IMR-90 (cell line): ENCODE measurements at regions of chr2 and their contacts with region 1.

Region 1: DNA sequence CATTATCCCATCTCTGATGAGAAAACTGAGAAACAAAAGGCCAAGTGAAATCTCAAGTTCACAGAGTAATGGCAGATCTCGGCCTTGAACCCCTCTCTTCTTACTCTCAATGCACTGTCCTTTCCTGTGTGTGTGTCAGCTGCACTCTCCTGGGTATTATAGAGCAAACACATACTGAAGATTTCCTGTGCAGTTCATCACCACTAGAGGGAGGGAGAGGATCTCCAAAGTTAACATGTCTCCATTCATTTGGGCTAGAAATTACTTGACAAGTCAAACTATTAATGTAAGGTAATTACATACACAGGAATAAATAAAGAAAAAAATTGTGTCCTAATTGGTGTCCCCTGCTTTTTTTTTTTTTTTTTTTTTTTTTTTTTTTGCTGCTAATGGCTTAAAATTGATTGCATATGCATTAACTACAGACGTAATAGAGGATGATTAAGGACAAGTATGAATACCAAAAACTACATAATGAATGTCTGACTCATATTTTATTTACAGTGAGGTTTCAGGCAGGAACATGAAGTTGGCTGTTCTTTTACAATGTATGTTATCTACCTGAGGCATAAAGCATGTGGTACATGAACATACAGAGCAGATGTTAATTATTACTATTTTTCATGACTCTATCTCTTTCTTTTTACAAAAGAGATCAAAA is 269.2 kb downstream of the NYAP2 start:
- DNase-seq: peak; percentile 81
- ATAC-seq: peak; percentile 94
- H3K4me3 ChIP-seq: no peak overlapping the region
- H3K27ac ChIP-seq: no peak overlapping the region
- H3K4me1 ChIP-seq: peaks cover under 1% of the 10 kb centered on the region; the same call in 1 of the 2 replicates
- H3K27me3 ChIP-seq: no peaks in the 10 kb centered on the region
- CTCF ChIP-seq: peak; percentile 82
- POLR2A ChIP-seq: no peak
- RAD21 ChIP-seq: peak; percentile 78

Region 2: GRCh38 chr2:226118471-226119430 is 450.0 kb after region 1 on chr2:
- CTCF ChIA-PET with region 1: no interaction called
- POLR2A ChIA-PET with region 1: no interaction called
- dilution Hi-C with region 1: no loop called
- in situ Hi-C with region 1: no loop called
- intact Hi-C with region 1: loop called (anchors 1 kb)
- DNase-seq: peak; percentile 91
- ATAC-seq: peak; percentile 42
- H3K4me3 ChIP-seq: peak overlapping the region; percentile 6; the same call in 1 of the 2 replicates
- H3K27ac ChIP-seq: peak overlapping the region; percentile 92
- H3K4me1 ChIP-seq: peaks cover 8% of the 10 kb centered on the region
- H3K27me3 ChIP-seq: no peaks in the 10 kb centered on the region
- CTCF ChIP-seq: no peak
- POLR2A ChIP-seq: no peak
- RAD21 ChIP-seq: no peak; the same call in 1 of the 2 replicates

Region 3: DNA sequence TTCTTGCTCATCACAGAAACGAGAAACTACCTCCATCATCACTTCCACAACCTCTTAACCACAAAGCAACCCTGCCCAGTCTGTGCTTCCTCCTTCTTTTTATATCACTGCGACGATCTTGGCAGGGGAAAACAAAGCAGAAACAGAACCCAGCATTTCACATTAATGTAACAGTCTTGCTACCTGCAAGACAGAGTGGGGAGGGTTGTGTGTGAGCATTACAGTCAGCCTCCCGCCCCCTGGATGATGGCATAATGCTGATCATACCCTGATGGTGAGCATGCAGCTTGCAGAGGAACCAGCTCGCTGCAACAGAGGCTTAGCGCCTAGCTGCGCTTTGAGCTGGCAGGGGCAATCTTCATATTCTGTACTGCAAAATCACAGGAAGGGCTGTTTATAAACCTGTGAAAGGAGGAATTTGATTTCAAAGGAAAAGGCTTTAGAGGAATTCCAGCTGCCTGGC is 754.8 kb after region 1 on chr2:
- CTCF ChIA-PET with region 1: interaction called, 5 read pairs
- POLR2A ChIA-PET with region 1: no interaction called
- dilution Hi-C with region 1: no loop called
- in situ Hi-C with region 1: no loop called
- intact Hi-C with region 1: loop called (anchors 2 kb)
- DNase-seq: peak; percentile 51
- ATAC-seq: no peak
- H3K4me3 ChIP-seq: no peak overlapping the region
- H3K27ac ChIP-seq: peak overlapping the region; percentile 80
- H3K4me1 ChIP-seq: peaks cover 24% of the 10 kb centered on the region
- H3K27me3 ChIP-seq: no peaks in the 10 kb centered on the region
- CTCF ChIP-seq: no peak
- POLR2A ChIP-seq: no peak
- RAD21 ChIP-seq: no peak

Region 4: DNA sequence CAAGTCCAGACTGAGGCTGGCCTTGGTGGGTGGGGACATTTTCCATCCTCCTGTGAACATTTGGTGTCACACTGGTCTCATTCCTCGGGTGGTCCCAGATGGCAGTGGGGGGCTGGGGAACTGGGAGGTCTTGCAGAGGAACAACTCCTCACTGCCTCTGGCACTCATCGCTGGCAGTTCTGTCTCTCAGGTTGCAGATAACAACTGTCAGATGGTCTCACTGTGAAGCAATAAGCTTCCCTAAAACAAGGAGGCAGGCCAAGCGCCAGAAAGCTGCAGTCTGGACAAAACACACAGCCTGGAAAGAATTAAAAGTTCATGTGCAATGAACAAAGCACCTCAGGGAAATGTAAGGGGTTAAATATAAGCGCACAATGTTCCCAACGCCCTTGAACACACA is 1052.8 kb after region 1 on chr2:
- CTCF ChIA-PET with region 1: no interaction called
- POLR2A ChIA-PET with region 1: no interaction called
- dilution Hi-C with region 1: no loop called
- in situ Hi-C with region 1: no loop called
- intact Hi-C with region 1: loop called (anchors 5 kb)
- DNase-seq: peak; percentile 36
- ATAC-seq: 0 out of 2 replicates have a peak, but pooled peaks have one; percentile 19
- H3K4me3 ChIP-seq: no peak overlapping the region
- H3K27ac ChIP-seq: no peak overlapping the region
- H3K4me1 ChIP-seq: peaks cover 12% of the 10 kb centered on the region
- H3K27me3 ChIP-seq: no peaks in the 10 kb centered on the region
- CTCF ChIP-seq: no peak
- POLR2A ChIP-seq: no peak
- RAD21 ChIP-seq: no peak

Region 5: DNA sequence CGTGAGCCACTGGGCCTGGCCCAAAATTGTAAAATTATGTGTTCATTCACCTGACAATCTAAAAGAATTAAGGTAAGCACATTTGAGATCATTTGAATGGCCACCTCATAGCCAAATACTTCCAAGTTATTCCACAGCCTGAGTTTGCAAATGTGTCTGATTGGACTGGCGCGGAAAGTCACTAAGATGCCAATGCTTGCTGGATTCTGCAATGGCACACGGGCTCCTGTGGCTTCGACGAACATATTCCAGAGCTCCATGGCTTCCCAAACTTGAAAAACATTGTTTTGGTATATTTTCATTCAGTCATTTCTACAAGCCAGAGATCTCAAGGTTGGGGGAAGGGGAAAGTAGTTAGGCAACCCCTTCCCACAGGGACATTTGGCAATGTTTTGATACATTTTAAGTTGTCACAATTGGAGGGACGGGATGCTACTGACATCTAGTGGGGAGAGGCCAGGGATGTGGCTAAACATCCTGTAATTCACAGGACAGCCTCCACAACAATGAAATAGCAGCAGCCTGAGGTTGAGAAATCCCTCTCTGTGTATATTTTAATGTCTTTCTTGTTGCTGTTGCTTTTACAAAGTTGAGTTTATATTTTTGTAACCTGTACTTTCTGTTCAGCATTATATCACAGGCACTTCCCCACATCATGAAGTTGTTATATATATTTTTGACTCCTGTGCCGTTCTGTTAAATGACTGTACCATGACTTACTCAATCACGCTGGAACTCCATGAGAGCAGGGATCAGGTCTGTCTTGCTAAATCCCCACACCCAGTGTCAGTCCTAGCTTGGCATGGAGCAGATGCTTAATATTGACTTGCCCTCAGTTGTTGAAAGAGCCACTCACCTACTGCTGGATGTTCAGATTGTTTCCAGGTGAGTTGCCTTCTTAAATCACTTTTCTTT is 1438.4 kb after region 1 on chr2:
- CTCF ChIA-PET with region 1: interaction called, 3 read pairs
- POLR2A ChIA-PET with region 1: no interaction called
- dilution Hi-C with region 1: no loop called
- in situ Hi-C with region 1: loop called (anchors 10 kb)
- intact Hi-C with region 1: loop called (anchors 1 kb)
- DNase-seq: peak; percentile 71
- ATAC-seq: peak; percentile 98
- H3K4me3 ChIP-seq: no peak overlapping the region
- H3K27ac ChIP-seq: no peak overlapping the region
- H3K4me1 ChIP-seq: no peaks in the 10 kb centered on the region
- H3K27me3 ChIP-seq: peaks cover 2% of the 10 kb centered on the region; the same call in 1 of the 2 replicates
- CTCF ChIP-seq: peak; percentile 93
- POLR2A ChIP-seq: no peak
- RAD21 ChIP-seq: peak; percentile 90